Colonic mucosa (tissue), 4 donors: ENCODE measurements at regions of chr3 and their contacts with region 1.

Region 1: DNA sequence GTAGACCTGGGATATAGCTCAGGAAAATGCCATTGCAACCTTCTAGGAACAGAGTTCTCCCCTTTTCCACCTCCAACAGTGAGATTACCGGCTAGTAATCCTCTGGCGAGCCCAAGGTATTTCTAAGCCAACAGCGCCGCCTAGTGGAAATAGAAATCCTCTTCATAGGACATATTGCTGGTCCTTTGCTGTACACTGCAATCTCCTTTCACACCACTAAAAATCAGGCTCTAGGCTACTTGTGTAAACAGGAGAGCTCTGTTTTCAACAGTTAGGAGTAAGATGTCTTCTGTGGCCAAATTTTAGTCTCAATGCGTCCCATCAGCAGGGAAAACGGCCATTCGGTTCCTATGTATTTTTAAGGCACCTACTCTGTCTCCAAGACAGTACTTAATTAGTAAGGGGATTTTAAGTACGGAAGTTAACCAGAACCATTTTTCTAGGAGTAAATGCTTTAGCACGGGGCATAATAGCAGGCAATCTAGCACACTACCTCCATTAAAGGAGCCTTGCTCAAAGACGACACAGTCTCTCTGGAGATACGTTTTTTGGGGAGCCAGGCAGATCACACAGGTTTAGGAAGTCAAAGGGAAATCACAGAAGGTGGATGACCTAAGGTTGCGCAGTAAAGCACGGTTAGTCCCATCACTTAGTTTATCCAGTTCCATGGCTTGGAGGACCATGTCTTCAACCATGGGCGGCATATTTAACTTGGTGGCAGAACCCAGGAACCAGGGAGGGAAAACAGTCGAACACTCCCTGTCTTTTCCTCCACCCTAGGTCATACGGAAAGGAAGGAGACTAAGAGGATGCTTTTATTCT is 43.8 kb downstream of the NCEH1 start:
- DNase-seq: peak; percentile 93
- H3K4me3 ChIP-seq: no peak overlapping the region
- H3K27ac ChIP-seq: no peak overlapping the region
- H3K4me1 ChIP-seq: no peaks in the 10 kb centered on the region
- H3K27me3 ChIP-seq: no peaks in the 10 kb centered on the region
- CTCF ChIP-seq: peak; percentile 76

Region 2: DNA sequence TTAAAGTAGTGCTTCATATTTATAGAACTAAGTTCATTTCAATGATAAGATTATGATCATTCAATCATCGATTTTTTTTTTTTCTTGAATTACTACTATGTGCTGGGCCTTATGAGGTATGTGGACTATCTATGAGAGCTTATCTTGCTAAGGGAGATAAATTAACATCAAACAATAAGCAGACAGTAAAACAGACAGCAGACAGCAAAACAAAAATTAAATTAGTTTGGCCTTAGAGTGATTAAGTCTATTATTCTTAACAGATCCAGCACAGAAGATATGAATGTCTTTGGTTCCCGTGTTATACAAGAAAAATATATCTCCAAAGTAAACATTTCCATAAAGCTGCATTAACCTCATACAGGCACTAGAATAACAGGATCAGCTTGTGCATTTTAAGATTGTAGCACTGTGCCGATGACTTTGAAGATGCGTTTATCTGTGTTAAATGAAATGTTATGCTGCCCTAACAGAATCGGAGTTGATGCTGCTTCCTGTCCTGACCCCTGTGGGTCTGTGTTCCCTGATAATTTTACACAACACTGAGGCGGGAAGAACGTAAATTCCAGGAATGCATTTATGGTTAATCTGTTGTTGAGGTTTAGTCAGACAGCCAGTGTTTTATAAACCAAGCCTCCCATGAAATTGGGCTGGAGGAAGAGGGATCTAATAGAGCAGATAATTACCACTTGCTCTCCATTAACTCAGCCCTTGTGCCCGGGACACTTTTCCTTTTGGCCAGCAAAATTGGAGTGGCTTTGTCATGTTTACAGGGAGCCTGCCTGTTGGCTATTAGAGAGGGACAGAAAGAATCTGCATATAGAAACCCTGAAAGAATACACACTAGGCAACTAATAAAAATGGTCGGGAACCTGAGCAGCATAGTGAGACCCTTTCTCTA is 299.6 kb before region 1 on chr3:
- intact Hi-C with region 1: loop called (anchors 10 kb)
- DNase-seq: no peak
- H3K4me3 ChIP-seq: no peak overlapping the region
- H3K27ac ChIP-seq: no peak overlapping the region
- H3K4me1 ChIP-seq: no peaks in the 10 kb centered on the region
- H3K27me3 ChIP-seq: no peaks in the 10 kb centered on the region
- CTCF ChIP-seq: no peak

Region 3: DNA sequence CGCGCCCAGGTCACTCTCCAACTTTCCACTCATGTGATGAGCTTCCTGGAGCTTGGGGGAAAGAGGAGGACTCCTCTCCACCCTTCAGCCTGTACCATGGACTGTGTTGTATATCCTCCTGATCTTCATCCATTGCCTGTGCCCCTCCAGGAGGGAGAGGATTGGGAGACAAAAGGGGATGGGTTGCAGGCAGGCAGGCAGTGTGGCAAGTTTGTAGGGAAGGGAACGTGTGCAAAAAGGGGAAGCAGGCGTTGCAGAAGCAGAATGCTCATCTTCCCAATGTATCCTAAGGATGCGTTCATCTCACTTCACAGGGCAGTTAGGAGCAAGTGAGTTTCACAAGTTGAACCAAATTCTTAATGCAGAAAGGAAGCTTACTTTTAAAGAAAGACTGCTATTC is 190.7 kb before region 1 on chr3:
- intact Hi-C with region 1: loop called (anchors 10 kb)
- DNase-seq: no peak
- H3K4me3 ChIP-seq: no peak overlapping the region
- H3K27ac ChIP-seq: no peak overlapping the region
- H3K4me1 ChIP-seq: no peaks in the 10 kb centered on the region
- H3K27me3 ChIP-seq: no peaks in the 10 kb centered on the region
- CTCF ChIP-seq: no peak

Region 4: DNA sequence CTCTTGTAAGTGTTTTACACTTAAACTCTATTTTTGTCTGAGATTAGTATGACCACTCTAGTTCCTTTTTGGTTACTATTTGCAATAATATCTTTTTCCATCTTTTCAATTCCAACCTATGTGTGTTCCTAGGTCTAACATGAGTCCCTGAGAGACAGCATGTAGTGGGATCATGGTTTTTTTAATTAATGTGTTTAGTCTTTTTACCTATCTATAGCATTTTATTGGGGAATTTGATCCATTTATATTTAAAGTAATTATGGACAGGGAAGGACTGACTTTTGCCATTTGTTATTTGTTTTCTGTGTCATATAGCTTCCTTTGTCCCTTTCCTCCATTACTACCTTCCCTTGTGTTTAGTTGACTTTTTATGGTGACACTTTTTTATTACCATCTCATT is 165.5 kb before region 1 on chr3:
- intact Hi-C with region 1: no loop called
- DNase-seq: no peak
- H3K4me3 ChIP-seq: no peak overlapping the region
- H3K27ac ChIP-seq: no peak overlapping the region
- H3K4me1 ChIP-seq: no peaks in the 10 kb centered on the region
- H3K27me3 ChIP-seq: no peaks in the 10 kb centered on the region
- CTCF ChIP-seq: no peak

Region 5: DNA sequence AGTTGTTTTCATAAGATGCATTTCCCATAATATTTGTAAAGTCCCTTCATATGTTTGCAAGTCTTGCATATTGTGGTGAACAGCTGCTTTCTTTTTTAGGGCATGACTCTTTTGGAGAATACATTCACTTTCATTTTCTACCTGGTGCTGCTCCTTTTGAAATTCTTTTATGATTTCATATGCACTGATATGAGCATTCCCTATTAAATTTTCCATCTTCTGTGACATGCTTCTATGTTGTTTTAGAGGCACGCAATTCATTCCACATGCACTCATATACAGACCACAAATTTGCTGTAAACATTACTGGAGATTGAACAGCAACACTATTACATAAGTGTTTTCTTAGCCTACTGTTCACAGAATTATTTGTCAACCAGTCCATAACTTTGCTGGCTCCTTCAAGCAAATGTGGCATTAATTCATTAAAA is 51.0 kb before region 1 on chr3:
- intact Hi-C with region 1: no loop called
- DNase-seq: no peak
- H3K4me3 ChIP-seq: no peak overlapping the region
- H3K27ac ChIP-seq: no peak overlapping the region
- H3K4me1 ChIP-seq: no peaks in the 10 kb centered on the region
- H3K27me3 ChIP-seq: no peaks in the 10 kb centered on the region
- CTCF ChIP-seq: no peak

Region 6: DNA sequence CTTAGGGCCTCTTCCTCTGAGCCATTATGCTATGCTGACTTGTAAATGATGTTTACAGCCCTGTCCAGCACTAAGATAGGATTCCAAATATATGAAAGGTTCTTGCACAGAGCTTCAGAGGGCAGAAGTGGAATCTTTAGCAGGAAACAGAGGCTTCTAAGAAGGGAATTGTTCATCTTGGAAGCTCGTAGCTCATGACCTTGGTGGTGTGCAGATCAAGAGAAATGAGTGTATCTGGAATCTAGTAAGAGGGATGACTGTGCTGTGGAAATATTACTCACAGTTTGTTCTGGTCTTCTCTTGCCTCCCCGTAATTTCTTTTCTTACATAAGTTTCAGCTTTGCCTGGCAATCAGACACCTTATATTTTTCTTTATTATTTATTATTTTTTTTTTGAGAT is 298.2 kb after region 1 on chr3:
- intact Hi-C with region 1: no loop called
- DNase-seq: no peak
- H3K4me3 ChIP-seq: no peak overlapping the region
- H3K27ac ChIP-seq: no peak overlapping the region
- H3K4me1 ChIP-seq: no peaks in the 10 kb centered on the region
- H3K27me3 ChIP-seq: no peaks in the 10 kb centered on the region
- CTCF ChIP-seq: no peak